HEK293 (cell line): ENCODE measurements at regions of chr15 and their contacts with region 1.

Region 1: DNA sequence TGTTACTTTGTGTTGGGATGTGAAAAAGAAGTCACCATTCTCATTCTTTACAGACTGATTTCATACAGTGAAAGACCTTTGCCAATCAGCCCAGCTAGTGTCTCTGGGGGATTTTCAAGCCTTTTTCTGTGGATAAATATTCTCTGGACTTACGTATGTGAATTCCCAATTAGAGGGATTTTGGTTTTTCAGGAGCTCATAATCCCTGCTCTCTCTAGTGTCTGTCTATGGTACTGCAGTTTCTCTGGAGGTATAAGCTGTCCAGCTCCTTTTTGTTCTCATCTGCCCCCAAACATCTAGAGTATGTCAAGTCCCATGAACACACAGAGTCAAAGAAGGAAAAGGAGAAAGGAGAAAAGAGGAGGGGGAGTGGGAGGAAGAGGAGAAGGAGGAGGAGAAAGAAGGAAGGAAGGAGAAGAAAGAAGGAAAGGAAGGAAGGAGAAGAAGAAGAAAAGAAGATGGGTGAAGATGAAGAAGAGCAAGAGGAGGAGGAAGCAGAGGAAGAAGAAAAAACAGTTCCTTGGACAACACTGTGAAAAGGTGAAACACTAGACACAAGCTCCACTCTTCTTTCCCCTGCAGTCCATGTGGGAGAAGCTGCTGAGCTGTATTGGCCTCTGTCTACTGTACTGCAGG is 218.6 kb downstream of the GREM1 start:
- H3K4me3 ChIP-seq: no peak overlapping the region
- H3K27ac ChIP-seq: no peak overlapping the region
- H3K4me1 ChIP-seq: no peaks in the 10 kb centered on the region
- CTCF ChIP-seq: no peak

Region 2: DNA sequence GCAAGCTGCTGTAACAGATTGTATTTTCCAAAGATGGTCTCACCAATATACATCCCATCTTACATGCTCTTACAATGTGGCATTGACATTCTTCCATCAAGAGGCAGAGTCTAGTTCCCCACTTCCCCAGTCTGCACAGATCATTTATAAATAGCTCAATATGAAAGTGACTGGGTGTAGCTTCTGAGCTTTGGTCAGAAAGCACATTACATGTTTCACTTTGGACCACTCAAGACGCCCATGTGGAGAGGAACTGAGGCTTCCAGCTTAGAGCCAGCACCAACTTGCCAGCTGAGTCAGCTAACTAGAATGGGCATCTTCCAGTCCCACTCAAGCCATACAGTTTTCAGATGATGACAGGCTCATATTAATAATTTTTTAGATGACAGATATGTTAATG is 173.1 kb before region 1 on chr15:
- CTCF ChIA-PET with region 1: no interaction called
- POLR2A ChIA-PET with region 1: no interaction called
- H3K4me3 ChIP-seq: no peak overlapping the region
- H3K27ac ChIP-seq: no peak overlapping the region
- H3K4me1 ChIP-seq: no peaks in the 10 kb centered on the region
- CTCF ChIP-seq: no peak

Region 3: DNA sequence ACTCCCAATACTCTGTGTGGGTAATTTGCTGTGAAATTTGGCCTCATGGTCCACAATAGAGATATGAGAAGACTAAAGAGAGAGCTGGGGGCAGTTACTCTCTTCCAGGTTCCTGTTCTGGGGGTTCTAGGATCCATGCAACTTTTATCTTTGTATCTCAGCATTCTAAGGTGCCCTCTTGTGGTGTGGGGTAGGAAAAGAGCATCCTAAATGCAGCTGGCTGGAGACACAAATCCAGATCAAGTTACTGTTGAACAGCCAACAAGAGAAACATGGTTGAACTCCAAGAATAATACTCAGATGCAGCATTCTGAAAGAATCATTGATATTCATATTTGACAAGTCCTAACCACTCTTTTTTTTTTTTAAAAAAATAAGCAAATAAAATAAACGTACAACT is 19.6 kb after region 1 on chr15:
- CTCF ChIA-PET with region 1: interaction called, 11 read pairs
- POLR2A ChIA-PET with region 1: no interaction called
- H3K4me3 ChIP-seq: no peak overlapping the region
- H3K27ac ChIP-seq: no peak overlapping the region
- H3K4me1 ChIP-seq: no peaks in the 10 kb centered on the region
- CTCF ChIP-seq: no peak